B cell (primary cell): ENCODE measurements at regions of chr12 and their contacts with region 1.

Region 1: DNA sequence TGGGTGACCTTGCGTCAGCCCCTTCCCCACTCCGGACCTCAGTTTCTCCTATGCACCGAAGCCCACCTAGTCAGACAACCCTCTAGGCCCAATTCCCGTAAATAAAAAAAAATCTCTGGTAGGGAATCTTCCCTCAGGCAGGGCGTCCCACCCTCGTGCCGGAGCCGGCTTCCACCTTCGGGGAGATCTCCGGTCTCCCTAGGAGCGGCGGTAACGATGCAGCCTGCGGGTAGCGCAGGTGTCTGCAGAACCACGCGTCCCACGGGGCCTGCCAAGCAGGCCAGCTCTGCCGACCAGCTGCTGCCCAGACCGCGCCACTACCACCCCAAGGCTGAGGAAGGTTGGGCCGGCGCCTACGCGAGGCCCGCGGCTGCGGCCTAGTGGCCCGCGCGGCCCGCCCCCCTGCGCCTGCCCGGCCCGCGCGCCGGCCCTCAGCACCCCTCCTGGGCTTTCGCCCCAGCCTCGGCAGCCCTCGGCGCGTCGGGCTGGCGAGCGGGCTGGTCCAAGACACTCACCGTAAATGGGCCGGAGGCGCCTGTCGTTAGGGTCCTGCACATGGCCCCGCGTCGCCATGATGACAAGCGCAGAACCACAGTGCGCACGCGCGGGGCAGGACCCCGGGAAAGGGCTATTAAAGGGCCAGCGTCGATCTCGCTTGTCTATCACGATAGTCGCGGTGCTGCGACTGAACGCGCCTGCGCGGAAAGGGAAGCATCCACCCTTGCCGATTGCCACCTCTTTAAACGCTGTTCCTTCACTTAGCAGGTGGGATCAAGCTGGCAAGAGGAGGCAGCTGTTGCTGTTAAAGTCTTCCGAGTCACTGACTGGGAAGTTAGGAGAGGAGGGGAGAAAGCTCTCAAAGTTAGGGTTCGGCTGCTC is at the start of gene NAA25:
- DNase-seq: peak; percentile 91
- ATAC-seq: peak; percentile 72
- H3K4me3 ChIP-seq: peak within 1 kb of the TSS; percentile 84 to 100 (median 97)
- H3K4me3 Mint-ChIP-seq: peak within 1 kb of the TSS; percentile 99
- H3K27ac ChIP-seq: peak within 1 kb of the TSS; percentile 81 to 88
- H3K27ac Mint-ChIP-seq: peak within 1 kb of the TSS; percentile 99
- H3K4me1 ChIP-seq: peaks cover 25 to 29% of the 10 kb centered on the region in 2 donors
- H3K4me1 Mint-ChIP-seq: peaks cover 39% of the 10 kb centered on the region
- H3K27me3 ChIP-seq: no peaks in the 10 kb centered on the region
- H3K27me3 Mint-ChIP-seq: no peaks in the 10 kb centered on the region
- CTCF ChIP-seq: no peak
- total RNA-seq, gene NAA25: 36.5 and 40.8 TPM in 2 replicates

Region 2: GRCh38 chr12:112130441-112130998 is 22.1 kb after region 1 on chr12:
- CTCF ChIA-PET with region 1: interaction called, 10 read pairs
- POLR2A ChIA-PET with region 1: interaction called, 35 read pairs
- intact Hi-C with region 1: loop called (anchors 1 kb)
- DNase-seq: peak; percentile 78
- ATAC-seq: peak; percentile 62
- H3K4me3 ChIP-seq: peak overlapping the region in 4 of 5 experiments; percentile 27 to 60 (median 52)
- H3K4me3 Mint-ChIP-seq: peak overlapping the region; percentile 78
- H3K27ac ChIP-seq: peak overlapping the region; percentile 60 to 81
- H3K27ac Mint-ChIP-seq: peak overlapping the region; percentile 84
- H3K4me1 ChIP-seq: peaks cover 49 to 51% of the 10 kb centered on the region in 2 donors
- H3K4me1 Mint-ChIP-seq: peaks cover 58% of the 10 kb centered on the region
- H3K27me3 ChIP-seq: no peaks in the 10 kb centered on the region
- H3K27me3 Mint-ChIP-seq: no peaks in the 10 kb centered on the region
- CTCF ChIP-seq: no peak